Head of caudate nucleus (tissue), 42 donors: ENCODE measurements at regions of chr10 and their contacts with region 1.

Region 1: DNA sequence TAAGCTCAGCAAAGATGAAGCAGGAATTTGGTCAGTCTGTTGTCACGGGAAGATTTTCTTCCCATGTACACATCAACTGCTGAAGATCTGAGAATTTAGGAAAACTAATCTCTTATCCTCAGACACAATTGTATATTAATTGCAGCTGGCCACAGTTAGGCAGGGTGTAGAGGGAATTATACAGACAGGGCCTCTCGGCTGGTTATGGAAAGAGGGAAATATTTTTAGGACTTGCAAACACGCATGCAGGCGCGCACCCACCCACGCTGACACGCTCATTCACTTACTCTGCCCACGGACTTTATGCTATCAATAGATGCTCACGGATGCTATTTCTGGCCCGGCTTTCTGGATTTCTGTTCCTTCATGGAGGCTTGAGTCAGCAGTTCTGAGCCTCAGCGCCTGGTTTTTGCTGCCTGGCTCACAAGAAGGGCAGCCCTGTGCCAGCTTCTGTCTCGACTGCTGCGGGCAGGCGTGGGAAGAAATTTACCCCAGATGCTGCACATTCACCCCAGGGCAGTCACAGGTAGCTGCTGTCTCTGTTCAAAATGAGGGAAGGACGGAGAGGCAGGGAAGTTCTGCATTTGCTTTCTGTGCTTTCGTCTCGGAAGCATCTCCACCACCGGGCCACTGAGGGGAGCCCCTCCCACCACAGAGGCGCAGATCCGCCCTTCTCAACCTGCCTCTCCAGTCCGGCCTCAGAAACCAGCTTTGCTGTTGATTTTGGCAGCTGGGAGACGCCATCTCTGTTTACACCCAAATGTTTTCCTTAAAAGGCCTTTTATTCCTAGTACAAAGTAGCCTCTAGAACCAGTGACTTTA is 116.3 kb upstream of the BTBD16 start:
- DNase-seq: peak; percentile 54 to 96 (median 81)

Region 2: GRCh38 chr10:122010405-122011050 is 144.2 kb before region 1 on chr10:
- intact Hi-C with region 1: no loop called
- DNase-seq: no peak

Region 3: DNA sequence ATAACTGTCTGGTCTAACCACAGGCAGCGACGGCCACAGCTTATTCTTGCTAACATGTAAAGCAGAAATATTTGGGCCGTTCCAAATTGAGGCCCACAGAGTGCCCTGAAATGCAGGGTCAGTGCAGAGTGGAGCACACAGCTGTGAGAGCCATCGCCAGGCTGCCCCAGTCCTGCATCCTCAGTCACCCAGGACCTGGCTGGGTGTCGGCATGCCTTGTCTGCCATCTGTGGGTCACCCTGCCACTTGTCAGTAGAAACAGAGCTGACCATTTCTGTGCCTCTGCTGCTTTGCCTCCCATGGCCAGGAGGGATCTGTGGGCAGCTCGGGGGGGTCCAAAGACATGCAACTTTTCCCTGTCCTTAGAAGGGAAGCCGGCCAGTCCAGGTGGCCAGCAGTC is 59.0 kb after region 1 on chr10:
- intact Hi-C with region 1: no loop called
- DNase-seq: peak in 41 of 42 donors; percentile 27 to 86 (median 64)

Region 4: DNA sequence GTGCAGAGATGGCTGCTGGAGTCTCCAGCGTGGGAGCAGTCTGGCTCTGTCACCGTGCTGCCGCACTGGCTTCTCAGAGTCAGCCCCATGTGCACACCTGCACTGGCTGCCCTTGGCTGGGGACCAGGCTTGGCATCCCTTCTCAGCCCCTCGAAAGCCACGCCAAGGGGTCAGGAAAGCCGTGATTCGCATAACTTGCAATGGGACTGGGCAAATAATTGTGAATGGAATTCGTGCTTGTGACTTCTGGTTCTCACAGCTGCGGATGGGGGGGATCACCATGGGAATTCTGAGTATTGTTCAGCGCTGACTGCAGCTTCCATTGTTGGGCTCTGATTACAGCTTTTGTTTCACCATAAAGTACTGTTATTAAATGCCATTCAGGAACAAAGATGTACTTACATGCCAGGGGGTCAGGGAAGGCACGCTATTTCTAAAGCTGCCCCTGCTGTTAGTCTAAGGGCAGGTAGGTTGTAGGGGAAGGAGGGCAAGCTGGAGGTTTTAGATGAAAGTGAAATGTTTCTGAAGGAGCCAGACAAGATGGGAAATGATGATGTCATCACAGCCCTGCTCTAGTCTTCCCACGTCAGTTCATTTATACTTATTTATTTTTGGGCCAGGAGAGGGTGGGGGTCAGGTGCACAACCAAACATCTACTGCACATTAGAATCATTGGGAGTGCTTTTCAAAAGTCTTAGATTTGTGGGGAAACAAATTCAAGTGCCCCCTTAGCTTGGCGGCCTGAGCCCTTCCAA is 213.9 kb after region 1 on chr10:
- intact Hi-C with region 1: loop called (anchors 10 kb)
- DNase-seq: peak; percentile 22 to 87 (median 64)